GM10248 (cell line): ENCODE measurements at regions of chr9 and their contacts with region 1.

Region 1: DNA sequence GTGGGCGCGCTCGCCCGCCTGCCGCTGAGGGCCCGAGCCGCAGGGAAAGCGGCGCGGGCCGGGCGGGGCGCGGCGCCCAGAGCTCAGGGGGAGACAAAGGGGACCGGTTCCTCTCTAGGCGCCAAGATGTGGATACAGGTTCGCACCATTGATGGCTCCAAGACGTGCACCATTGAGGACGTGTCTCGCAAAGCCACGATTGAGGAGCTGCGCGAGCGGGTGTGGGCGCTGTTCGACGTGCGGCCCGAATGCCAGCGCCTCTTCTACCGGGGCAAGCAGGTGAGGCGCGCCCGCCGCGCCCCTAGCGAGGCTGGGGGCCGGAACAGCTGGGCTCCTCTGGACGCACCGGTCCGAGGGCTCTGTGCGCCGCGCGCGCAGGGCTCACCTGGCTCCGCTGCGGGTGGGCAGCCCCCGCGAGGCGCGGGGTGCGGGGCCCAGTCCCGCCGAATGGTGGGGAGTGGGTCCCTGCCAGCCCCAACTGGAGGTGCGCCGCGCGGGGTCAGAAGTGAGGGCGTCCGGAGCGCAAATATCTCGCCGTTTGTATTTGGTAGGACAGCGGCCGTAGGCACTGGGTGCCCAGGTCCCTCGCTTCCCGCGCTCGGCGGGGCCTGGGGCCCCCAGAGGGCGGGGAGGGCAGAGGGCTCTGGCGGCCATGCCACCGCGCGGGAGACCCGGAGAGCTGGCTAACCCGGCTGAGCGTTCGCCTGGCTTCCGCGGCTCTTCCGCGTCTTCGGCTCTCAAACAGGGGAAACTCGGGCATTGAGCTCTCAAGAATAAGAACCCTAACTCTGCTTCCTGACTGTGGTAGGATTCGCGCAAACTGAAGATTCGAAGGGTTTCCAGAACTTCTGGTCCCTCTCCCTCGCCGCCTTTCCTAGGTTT is 607 bp downstream of the UHRF2 start:
- DNase-seq: no peak
- CTCF ChIP-seq: no peak

Region 2: GRCh38 chr9:6194934-6195333 is 218.7 kb before region 1 on chr9:
- CTCF ChIA-PET with region 1: no interaction called
- POLR2A ChIA-PET with region 1: no interaction called
- DNase-seq: no peak
- CTCF ChIP-seq: no peak

Region 3: GRCh38 chr9:6426117-6426516 is 12.5 kb after region 1 on chr9:
- CTCF ChIA-PET with region 1: interaction called, 18 read pairs
- POLR2A ChIA-PET with region 1: interaction called, 8 read pairs
- DNase-seq: no peak
- CTCF ChIP-seq: no peak